Activated CD4-positive, alpha-beta memory T cell treated with anti-CD3 and anti-CD28 coated beads, Interleukin-2, amount 10 ng/mL, durations not matched to agents 7 days and 5 days (primary cell): ENCODE measurements at regions of chr5 and their contacts with region 1.

Region 1: GRCh38 chr5:119411935-119412602 is 40.2 kb upstream of the HSD17B4 start:
- DNase-seq: peak; percentile 58
- H3K4me3 Mint-ChIP-seq: peak overlapping the region; percentile 70
- H3K27ac Mint-ChIP-seq: peak overlapping the region; percentile 13
- H3K4me1 Mint-ChIP-seq: peaks cover 32% of the 10 kb centered on the region
- H3K27me3 Mint-ChIP-seq: peaks cover 6% of the 10 kb centered on the region

Region 2: GRCh38 chr5:119022017-119022745 is 389.9 kb before region 1 on chr5:
- CTCF ChIA-PET with region 1: interaction called, 49 read pairs
- POLR2A ChIA-PET with region 1: interaction called, 4 read pairs
- DNase-seq: no peak
- H3K4me3 Mint-ChIP-seq: no peak overlapping the region
- H3K27ac Mint-ChIP-seq: no peak overlapping the region
- H3K4me1 Mint-ChIP-seq: no peaks in the 10 kb centered on the region
- H3K27me3 Mint-ChIP-seq: no peaks in the 10 kb centered on the region

Region 3: DNA sequence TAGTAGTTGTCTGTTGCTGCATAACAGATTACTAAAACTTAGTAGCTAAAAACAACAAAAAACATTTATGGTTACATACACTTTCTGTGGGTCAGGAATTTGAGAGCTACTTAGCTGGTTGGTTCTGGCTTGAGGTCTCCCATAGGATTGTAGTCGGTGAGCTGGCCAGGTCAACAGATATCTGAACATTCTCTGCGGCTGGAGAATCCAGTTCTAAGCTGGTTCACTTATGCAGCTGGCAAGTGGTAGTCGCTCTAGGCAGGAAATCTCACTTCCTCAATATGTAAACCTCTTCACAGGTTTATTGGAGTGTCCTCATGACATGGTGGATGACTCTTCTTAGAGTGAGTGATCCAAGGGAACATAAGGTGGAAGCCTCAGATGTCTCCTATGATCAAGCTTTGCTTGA is 121.9 kb before region 1 on chr5:
- CTCF ChIA-PET with region 1: interaction called, 10 read pairs
- POLR2A ChIA-PET with region 1: interaction called, 3 read pairs
- DNase-seq: no peak
- H3K4me3 Mint-ChIP-seq: peak overlapping the region; percentile 56
- H3K27ac Mint-ChIP-seq: peak overlapping the region; percentile 80
- H3K4me1 Mint-ChIP-seq: peaks cover 85% of the 10 kb centered on the region
- H3K27me3 Mint-ChIP-seq: no peaks in the 10 kb centered on the region

Region 4: DNA sequence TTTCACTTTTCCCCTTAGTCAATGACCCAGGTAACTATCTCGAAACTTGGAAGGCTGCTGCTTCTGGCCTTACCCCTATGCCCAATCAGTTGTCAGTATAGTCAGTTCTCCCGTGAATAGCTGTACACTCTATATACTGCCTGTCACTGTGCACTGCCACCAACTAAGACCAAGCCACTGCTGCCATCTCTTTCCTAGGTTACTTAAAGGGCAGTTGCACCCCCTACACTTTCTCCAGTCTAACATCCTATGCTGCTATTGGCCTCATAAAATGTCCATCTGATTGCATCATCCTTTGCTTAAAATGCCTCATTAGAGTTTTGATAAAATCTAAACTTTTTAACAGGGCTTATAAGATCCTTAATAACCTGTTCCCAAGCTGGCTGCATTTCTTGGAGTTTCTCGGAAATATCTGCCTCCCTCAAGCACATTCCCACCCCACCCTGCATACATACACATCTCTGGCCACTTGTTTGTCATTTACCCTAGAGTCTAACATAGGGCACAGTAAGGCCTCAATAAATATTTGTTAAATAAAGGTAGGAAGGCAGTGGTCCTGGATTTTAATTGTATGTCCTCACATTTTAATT is 89.0 kb before region 1 on chr5:
- CTCF ChIA-PET with region 1: interaction called, 17 read pairs
- POLR2A ChIA-PET with region 1: no interaction called
- DNase-seq: no peak
- H3K4me3 Mint-ChIP-seq: peak overlapping the region; percentile 45
- H3K27ac Mint-ChIP-seq: peak overlapping the region; percentile 81
- H3K4me1 Mint-ChIP-seq: peaks cover 93% of the 10 kb centered on the region
- H3K27me3 Mint-ChIP-seq: no peaks in the 10 kb centered on the region

Region 5: GRCh38 chr5:119355685-119356611 is 56.1 kb before region 1 on chr5 and contains the start of gene TNFAIP8:
- CTCF ChIA-PET with region 1: interaction called, 12 read pairs
- POLR2A ChIA-PET with region 1: interaction called, 4 read pairs
- DNase-seq: peak; percentile 65
- H3K4me3 Mint-ChIP-seq: peak within 1 kb of the TSS; percentile 94
- H3K27ac Mint-ChIP-seq: peak within 1 kb of the TSS; percentile 88
- H3K4me1 Mint-ChIP-seq: peaks cover 89% of the 10 kb centered on the region
- H3K27me3 Mint-ChIP-seq: no peaks in the 10 kb centered on the region
- total RNA-seq, gene TNFAIP8: 161 to 163 TPM